GM23248 (cell line): ENCODE measurements at regions of chr3 and their contacts with region 1.

Region 1: DNA sequence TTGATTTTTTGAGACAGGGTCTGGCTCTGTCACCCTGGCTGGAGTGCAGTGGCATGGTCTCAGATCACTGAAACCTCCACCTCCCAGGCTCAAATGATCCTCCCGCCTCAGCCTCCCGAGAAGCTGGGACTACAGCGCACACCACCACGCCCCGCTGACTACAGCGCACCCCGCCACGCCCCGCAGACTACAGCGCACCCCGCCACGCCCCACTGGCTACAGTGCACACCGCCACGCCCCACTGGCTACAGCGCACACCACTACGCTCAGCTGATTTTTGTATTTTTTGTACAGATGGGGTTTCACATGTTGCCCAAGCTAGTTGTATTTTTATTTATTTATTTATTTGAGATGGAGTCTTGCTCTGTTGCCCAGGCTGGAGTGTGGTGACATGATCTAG is 35.6 kb downstream of the SLC51A start:
- DNase-seq: no peak
- H3K4me3 ChIP-seq: no peak overlapping the region
- H3K27ac ChIP-seq: no peak overlapping the region
- H3K4me1 ChIP-seq: no peaks in the 10 kb centered on the region
- H3K27me3 ChIP-seq: no peaks in the 10 kb centered on the region

Region 2: GRCh38 chr3:196528639-196529233 is 276.8 kb after region 1 on chr3:
- in situ Hi-C with region 1: loop called (anchors 10 kb)
- DNase-seq: peak; percentile 89
- H3K4me3 ChIP-seq: peak overlapping the region; percentile 63
- H3K27ac ChIP-seq: peak overlapping the region; percentile 70
- H3K4me1 ChIP-seq: peaks cover 10% of the 10 kb centered on the region
- H3K27me3 ChIP-seq: no peaks in the 10 kb centered on the region

Region 3: GRCh38 chr3:196546537-196546936 is 294.6 kb after region 1 on chr3:
- in situ Hi-C with region 1: no loop called
- DNase-seq: no peak
- H3K4me3 ChIP-seq: no peak overlapping the region
- H3K27ac ChIP-seq: no peak overlapping the region
- H3K4me1 ChIP-seq: no peaks in the 10 kb centered on the region
- H3K27me3 ChIP-seq: no peaks in the 10 kb centered on the region